ENCODE measurements at regions of chr7 and their contacts with region 1.

Region 1: GRCh38 chr7:66576646-66577045 is 52.0 kb upstream of the KCTD7 start:
- DNase-seq: no peak
- ATAC-seq: no peak
- H3K4me3 Mint-ChIP-seq: no peak overlapping the region
- H3K27ac Mint-ChIP-seq: no peak overlapping the region
- H3K4me1 Mint-ChIP-seq: peaks cover 40% of the 10 kb centered on the region
- H3K27me3 Mint-ChIP-seq: no peaks in the 10 kb centered on the region

Region 2: GRCh38 chr7:66452165-66452564 is 124.5 kb before region 1 on chr7:
- CTCF ChIA-PET with region 1: no interaction called
- POLR2A ChIA-PET with region 1: no interaction called
- intact Hi-C with region 1: loop called in 1 of 2 experiments (anchors 1 kb)
- DNase-seq: no peak
- ATAC-seq: no peak
- H3K4me3 Mint-ChIP-seq: no peak overlapping the region
- H3K27ac Mint-ChIP-seq: no peak overlapping the region
- H3K4me1 Mint-ChIP-seq: peaks cover 15% of the 10 kb centered on the region
- H3K27me3 Mint-ChIP-seq: no peaks in the 10 kb centered on the region

Region 3: GRCh38 chr7:66609176-66609575 is 32.5 kb after region 1 on chr7:
- CTCF ChIA-PET with region 1: no interaction called
- POLR2A ChIA-PET with region 1: no interaction called
- intact Hi-C with region 1: no loop called
- DNase-seq: no peak
- ATAC-seq: no peak
- H3K4me3 Mint-ChIP-seq: no peak overlapping the region
- H3K27ac Mint-ChIP-seq: no peak overlapping the region
- H3K4me1 Mint-ChIP-seq: no peaks in the 10 kb centered on the region
- H3K27me3 Mint-ChIP-seq: no peaks in the 10 kb centered on the region

Region 4: GRCh38 chr7:66804001-66804400 is 227.4 kb after region 1 on chr7:
- CTCF ChIA-PET with region 1: no interaction called
- POLR2A ChIA-PET with region 1: no interaction called
- intact Hi-C with region 1: no loop called
- DNase-seq: no peak
- ATAC-seq: no peak
- H3K4me3 Mint-ChIP-seq: no peak overlapping the region
- H3K27ac Mint-ChIP-seq: no peak overlapping the region
- H3K4me1 Mint-ChIP-seq: no peaks in the 10 kb centered on the region
- H3K27me3 Mint-ChIP-seq: no peaks in the 10 kb centered on the region

Measured in activated CD4-positive, alpha-beta T cell treated with anti-CD3 and anti-CD28 coated beads for 36 hours (primary cell).